H1 (cell line): ENCODE measurements at regions of chr3 and their contacts with region 1.

Region 1: GRCh38 chr3:159804726-159805410 is 183.8 kb upstream of the IL12A start:
- DNase-seq: peak; percentile 49 to 61
- H3K4me3 ChIP-seq: no peak overlapping the region
- H3K27ac ChIP-seq: no peak overlapping the region
- H3K4me1 ChIP-seq: peaks cover 0 to 3% (median 1%) of the 10 kb centered on the region in 4 experiments; a peak in 1 of 7 replicates
- H3K27me3 ChIP-seq: peaks cover 3 to 18% (median 11%) of the 10 kb centered on the region in 4 experiments; a peak in 6 of 7 replicates
- CTCF ChIP-seq: peak; percentile 70 to 95 (median 91)
- EP300 ChIP-seq: no peak
- POLR2A ChIP-seq: no peak
- RAD21 ChIP-seq: peak; percentile 99

Region 2: GRCh38 chr3:159322322-159322939 is 482.4 kb before region 1 on chr3:
- CTCF ChIA-PET with region 1: interaction called, 11 read pairs
- POLR2A ChIA-PET with region 1: no interaction called
- DNase-seq: peak; percentile 23 to 92
- H3K4me3 ChIP-seq: no peak overlapping the region
- H3K27ac ChIP-seq: no peak overlapping the region
- H3K4me1 ChIP-seq: no peaks in the 10 kb centered on the region
- H3K27me3 ChIP-seq: no peaks in the 10 kb centered on the region
- CTCF ChIP-seq: peak; percentile 85 to 94 (median 92)
- EP300 ChIP-seq: no peak
- POLR2A ChIP-seq: no peak
- RAD21 ChIP-seq: peak; percentile 77 to 81

Region 3: GRCh38 chr3:159559771-159560170 is 245.1 kb before region 1 on chr3:
- CTCF ChIA-PET with region 1: interaction called, 10 read pairs
- POLR2A ChIA-PET with region 1: no interaction called
- DNase-seq: no peak
- H3K4me3 ChIP-seq: peak overlapping the region in 1 of 4 experiments; percentile 42; a peak in 1 of 8 replicates
- H3K27ac ChIP-seq: no peak overlapping the region
- H3K4me1 ChIP-seq: peaks cover 0 to 15% (median 3%) of the 10 kb centered on the region in 4 experiments; a peak in 5 of 7 replicates
- H3K27me3 ChIP-seq: peaks cover 1 to 11% (median 7%) of the 10 kb centered on the region in 4 experiments; a peak in 4 of 7 replicates
- CTCF ChIP-seq: no peak
- EP300 ChIP-seq: no peak
- POLR2A ChIP-seq: no peak
- RAD21 ChIP-seq: no peak

Region 4: GRCh38 chr3:159616212-159616825 is 188.5 kb before region 1 on chr3:
- CTCF ChIA-PET with region 1: interaction called, 44 read pairs
- POLR2A ChIA-PET with region 1: no interaction called
- DNase-seq: peak in 1 of 2 experiments; percentile 61
- H3K4me3 ChIP-seq: no peak overlapping the region
- H3K27ac ChIP-seq: no peak overlapping the region
- H3K4me1 ChIP-seq: peaks cover 0 to 5% (median 0%) of the 10 kb centered on the region in 4 experiments; a peak in 2 of 7 replicates
- H3K27me3 ChIP-seq: no peaks in the 10 kb centered on the region
- CTCF ChIP-seq: peak; percentile 43 to 54 (median 49); a peak in 3 of 4 replicates
- EP300 ChIP-seq: no peak
- POLR2A ChIP-seq: no peak
- RAD21 ChIP-seq: peak; percentile 71 to 72

Region 5: DNA sequence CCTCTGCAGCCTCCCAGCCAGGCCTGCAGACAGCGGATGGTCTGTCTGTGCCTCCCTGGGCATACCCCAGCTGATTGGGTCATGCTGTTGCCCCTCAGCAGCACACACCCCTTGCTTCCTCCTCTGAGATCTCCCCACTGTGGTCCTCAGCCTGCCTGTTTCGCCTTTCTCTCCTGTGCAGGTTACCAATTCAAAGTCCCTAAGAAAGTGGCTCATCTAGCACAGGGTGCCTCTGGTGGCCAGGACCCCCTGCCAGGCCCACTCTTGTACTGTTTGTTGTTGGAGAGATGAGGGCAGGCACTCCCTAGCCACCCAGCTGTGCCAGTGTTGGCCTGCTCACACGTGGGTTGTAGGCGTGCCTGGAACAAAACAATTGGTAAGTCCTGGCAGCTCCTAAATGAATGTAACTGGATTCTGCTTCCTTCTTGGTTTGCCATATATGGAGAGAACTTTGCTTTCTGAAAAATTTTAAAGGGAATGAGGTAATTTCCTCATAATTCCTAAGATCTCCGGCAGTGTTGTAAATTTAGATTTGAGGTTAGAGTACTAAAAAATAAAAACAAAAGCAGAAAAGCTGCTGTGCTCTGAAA is 29.4 kb before region 1 on chr3:
- CTCF ChIA-PET with region 1: interaction called, 96 read pairs
- POLR2A ChIA-PET with region 1: no interaction called
- DNase-seq: peak; percentile 41 to 71
- H3K4me3 ChIP-seq: peak overlapping the region in 2 of 4 experiments; percentile 12 to 26; a peak in 1 of 8 replicates
- H3K27ac ChIP-seq: peak overlapping the region; percentile 64; the same call in 1 of the 2 replicates
- H3K4me1 ChIP-seq: peaks cover 0 to 12% (median 4%) of the 10 kb centered on the region in 4 experiments; a peak in 5 of 7 replicates
- H3K27me3 ChIP-seq: no peaks in the 10 kb centered on the region
- CTCF ChIP-seq: no peak
- EP300 ChIP-seq: 0 out of 3 replicates have a peak, but pooled peaks of 1 of the 2 experiments have one; percentile 31
- POLR2A ChIP-seq: 0 out of 3 replicates have a peak, but pooled peaks of 1 of the 2 experiments have one; percentile 26
- RAD21 ChIP-seq: no peak